ENCODE measurements at regions of chr13 and their contacts with region 1.

Region 1: GRCh38 chr13:40666045-40666904 is at the start of gene FOXO1:
- DNase-seq: peak; percentile 84
- H3K4me3 ChIP-seq: peak within 1 kb of the TSS; percentile 63 to 97 (median 93)
- H3K27ac ChIP-seq: peak within 1 kb of the TSS; percentile 39
- H3K4me1 ChIP-seq: peaks cover 13% of the 10 kb centered on the region
- H3K27me3 ChIP-seq: no peaks in the 10 kb centered on the region
- CTCF ChIP-seq: no peak
- total RNA-seq, gene FOXO1: 10.1 to 23.3 TPM

Region 2: DNA sequence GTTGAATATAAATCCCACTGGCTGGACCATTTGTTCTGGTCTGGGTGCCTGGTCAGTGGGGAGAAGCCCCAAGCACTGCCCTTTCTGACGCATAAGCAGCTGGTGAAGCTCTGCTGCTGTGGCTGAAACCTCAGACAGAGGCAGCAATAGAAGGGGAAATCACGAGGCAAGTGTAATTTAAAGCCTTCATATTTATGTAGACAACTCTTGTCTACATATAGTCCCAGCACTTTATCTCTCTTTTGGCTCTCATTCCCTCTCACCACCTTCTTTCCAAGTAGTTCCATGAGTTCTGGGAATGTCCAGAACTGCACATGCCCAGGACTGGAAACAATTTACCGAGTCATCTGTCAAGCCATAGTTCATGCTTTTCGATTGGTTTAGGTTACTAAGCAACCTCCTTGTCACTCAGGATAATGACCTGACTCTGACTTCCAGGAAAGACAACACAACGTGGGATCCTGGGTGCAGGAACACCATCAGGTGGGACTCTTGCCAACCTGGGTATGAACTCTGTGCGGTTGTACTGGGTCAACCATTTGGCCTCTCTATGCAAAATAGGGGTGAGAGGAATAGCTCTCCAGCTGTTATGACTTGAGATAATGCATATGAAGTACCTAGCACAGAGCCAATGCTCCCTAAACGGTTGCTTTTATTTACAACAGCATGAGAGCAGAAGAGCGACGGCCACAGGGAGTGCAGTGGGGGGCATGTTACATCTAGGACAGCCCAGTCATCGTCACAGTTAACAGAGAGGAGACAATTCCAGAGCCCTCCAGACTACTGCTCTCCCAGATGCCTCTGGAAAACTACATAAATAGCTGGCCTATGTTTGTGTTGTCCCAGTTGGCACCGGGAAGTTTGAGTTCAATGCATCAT is 321.8 kb before region 1 on chr13:
- CTCF ChIA-PET with region 1: no interaction called
- dilution Hi-C with region 1: no loop called
- in situ Hi-C with region 1: no loop called
- intact Hi-C with region 1: loop called (anchors 5 kb)
- DNase-seq: no peak
- H3K4me3 ChIP-seq: no peak overlapping the region
- H3K27ac ChIP-seq: no peak overlapping the region
- H3K4me1 ChIP-seq: no peaks in the 10 kb centered on the region
- H3K27me3 ChIP-seq: no peaks in the 10 kb centered on the region
- CTCF ChIP-seq: no peak

Region 3: DNA sequence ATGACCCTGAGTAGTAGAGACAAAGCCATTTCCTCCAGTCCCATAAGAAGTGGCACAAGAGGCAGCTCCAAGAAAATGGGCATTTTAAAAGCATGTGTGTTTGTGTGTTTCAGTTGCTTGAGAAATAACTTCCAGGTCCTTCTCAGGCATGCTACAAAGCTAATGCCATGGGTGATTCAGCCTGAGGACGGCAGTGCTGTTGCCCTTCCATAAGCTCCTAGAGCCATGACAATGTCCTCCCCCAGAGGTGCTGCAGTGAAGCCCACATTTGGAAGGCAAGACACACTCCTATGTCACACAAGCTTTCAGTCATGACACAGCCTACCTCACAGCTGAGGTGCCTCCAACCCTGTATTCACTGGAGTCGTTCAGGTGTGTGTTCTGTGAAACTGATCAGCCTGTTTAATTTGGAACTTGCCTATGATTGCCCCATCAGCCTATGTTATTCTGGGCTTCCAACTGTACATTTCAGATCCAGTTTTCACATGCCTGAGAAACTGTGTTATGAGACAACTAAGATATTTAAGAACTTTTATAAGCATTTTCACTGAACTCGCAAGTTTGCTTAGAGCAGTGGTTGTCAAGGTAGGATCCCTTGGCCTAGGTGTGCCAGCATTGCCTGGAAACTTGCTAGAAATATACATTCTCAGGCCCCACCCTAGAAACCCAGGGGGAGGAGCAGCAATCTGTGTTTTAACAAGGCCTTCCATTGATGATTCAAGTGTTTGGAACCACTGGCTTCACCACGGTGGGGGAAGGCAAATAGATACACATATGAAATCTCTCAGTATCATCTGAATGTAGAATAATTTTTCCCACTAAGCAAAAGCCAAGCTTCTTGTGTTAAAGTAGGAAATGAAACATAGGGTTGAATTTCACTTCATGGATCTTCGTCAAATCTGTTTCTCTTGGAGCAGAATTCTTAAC is 213.3 kb before region 1 on chr13:
- CTCF ChIA-PET with region 1: no interaction called
- dilution Hi-C with region 1: no loop called
- in situ Hi-C with region 1: no loop called
- intact Hi-C with region 1: loop called (anchors 1 kb)
- DNase-seq: peak; percentile 97
- H3K4me3 ChIP-seq: no peak overlapping the region
- H3K27ac ChIP-seq: peak overlapping the region; percentile 89
- H3K4me1 ChIP-seq: peaks cover 14% of the 10 kb centered on the region
- H3K27me3 ChIP-seq: no peaks in the 10 kb centered on the region
- CTCF ChIP-seq: no peak

Region 4: DNA sequence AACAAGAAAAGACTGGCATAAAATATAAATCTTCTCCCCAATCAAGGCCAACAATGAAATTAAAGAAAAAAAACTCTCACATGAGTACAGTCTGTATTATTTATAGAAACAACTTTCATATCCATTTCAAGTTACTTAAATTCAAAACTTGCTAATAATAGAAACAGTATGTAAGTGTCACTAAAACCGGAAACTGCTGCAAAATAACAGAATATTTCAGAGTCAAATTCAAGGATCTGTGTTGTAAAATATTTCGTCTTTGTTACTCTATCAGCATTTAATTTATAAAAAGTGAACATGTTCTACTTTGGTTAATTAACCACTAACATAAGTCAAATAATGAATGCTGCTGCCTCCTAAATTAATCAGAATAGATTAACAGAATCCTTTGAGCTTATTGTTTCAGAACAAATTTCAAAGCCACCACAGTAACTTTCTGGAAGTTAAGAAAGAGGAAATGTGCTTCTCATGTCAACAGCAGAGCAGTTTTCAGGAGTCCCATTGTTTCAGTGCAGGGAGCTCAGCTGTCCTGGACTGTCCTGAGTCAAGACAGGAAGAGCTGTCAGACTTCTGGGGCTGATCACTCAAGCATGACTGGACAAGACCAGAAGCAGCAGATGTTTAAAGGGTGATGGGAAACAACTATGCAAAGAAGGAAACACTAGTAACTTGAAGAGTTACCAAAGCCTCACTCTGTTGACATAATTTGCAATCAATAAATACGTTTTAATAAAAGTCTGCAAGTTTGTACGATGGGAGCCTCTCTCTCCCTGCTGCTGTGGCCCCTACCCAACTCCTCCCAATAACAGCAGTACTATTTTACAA is 76.8 kb before region 1 on chr13:
- CTCF ChIA-PET with region 1: no interaction called
- dilution Hi-C with region 1: no loop called
- in situ Hi-C with region 1: no loop called
- intact Hi-C with region 1: loop called (anchors 5 kb)
- DNase-seq: peak; percentile 89
- H3K4me3 ChIP-seq: no peak overlapping the region
- H3K27ac ChIP-seq: no peak overlapping the region
- H3K4me1 ChIP-seq: peaks cover 37% of the 10 kb centered on the region
- H3K27me3 ChIP-seq: no peaks in the 10 kb centered on the region
- CTCF ChIP-seq: no peak

Region 5: DNA sequence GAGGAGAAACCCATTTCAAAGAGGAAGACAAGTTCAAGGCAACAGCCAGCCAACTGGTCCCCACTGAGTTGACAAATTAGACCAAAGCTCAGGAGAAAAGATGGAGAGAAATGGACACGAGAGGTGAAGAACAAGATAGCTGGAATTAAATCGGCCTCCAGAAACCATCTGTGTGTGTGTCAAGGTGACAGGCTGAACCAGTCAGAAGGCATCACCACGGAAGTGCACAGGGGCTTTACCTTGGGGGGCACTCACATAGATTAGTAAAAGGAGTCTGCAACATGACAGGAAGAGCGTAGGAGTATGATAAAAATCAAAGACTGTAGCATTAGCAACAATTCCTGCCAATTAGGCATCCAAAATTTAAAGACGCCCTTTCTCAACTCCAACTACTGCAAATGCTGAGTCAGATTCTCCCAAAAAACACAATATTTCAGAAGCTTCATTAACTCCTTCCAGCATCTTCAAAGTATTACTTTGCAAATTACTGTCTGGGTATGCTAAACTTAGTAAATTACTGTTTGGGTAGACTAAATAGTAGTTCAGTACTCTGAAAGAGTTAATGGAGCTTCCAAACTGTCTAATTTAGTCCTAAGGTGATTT is 66.0 kb before region 1 on chr13:
- CTCF ChIA-PET with region 1: no interaction called
- dilution Hi-C with region 1: no loop called
- in situ Hi-C with region 1: no loop called
- intact Hi-C with region 1: no loop called
- DNase-seq: no peak
- H3K4me3 ChIP-seq: no peak overlapping the region
- H3K27ac ChIP-seq: no peak overlapping the region
- H3K4me1 ChIP-seq: peaks cover 14% of the 10 kb centered on the region
- H3K27me3 ChIP-seq: no peaks in the 10 kb centered on the region
- CTCF ChIP-seq: no peak

Region 6: GRCh38 chr13:40644838-40645604 is 21.3 kb before region 1 on chr13:
- CTCF ChIA-PET with region 1: no interaction called
- dilution Hi-C with region 1: no loop called
- in situ Hi-C with region 1: no loop called
- intact Hi-C with region 1: loop called (anchors 2 kb)
- DNase-seq: peak; percentile 74
- H3K4me3 ChIP-seq: no peak overlapping the region
- H3K27ac ChIP-seq: peak overlapping the region; percentile 25
- H3K4me1 ChIP-seq: peaks cover 16% of the 10 kb centered on the region
- H3K27me3 ChIP-seq: no peaks in the 10 kb centered on the region
- CTCF ChIP-seq: no peak